Esophagus muscularis mucosa (tissue), 4 donors: ENCODE measurements at regions of chr15 and their contacts with region 1.

Region 1: GRCh38 chr15:28086175-28086703 is 12.9 kb downstream of the OCA2 start:
- DNase-seq: no peak
- H3K4me3 ChIP-seq: no peak overlapping the region
- H3K27ac ChIP-seq: no peak overlapping the region
- H3K4me1 ChIP-seq: no peaks in the 10 kb centered on the region
- H3K27me3 ChIP-seq: peaks cover 0 to 12% (median 0%) of the 10 kb centered on the region in 4 donors
- CTCF ChIP-seq: peak; percentile 57 to 70 (median 62)
- EP300 ChIP-seq: no peak
- POLR2A ChIP-seq: no peak

Region 2: DNA sequence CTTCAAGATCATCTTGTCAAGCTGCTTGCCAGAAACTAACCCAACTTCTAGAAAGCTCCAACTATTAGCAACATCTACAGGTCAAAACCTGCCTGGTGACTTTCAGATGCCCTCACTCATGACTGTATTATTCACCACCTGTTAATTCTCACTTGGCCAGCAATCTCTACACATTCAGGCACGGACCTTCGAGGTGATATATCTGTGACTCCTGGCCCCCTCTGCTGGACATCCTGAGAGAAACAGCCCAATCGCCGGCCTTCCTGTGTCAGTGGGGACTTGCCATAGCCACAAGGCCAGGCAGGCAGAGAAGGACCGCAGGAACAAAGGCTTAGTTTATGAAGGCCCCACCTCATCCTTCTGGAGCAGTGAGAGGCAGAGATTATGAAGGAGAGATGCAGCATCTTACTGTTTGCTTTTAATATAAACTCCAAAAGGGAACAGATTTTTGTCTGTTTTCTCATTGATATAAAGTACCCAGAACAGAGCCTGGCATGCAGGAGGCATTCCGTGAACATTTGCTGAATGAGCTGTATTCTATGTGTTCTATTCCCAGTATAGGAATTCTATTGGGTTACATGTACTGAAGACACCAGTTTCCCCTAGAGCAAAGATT is 37.3 kb after region 1 on chr15:
- intact Hi-C with region 1: loop called (anchors 5 kb)
- DNase-seq: no peak
- H3K4me3 ChIP-seq: no peak overlapping the region
- H3K27ac ChIP-seq: no peak overlapping the region
- H3K4me1 ChIP-seq: no peaks in the 10 kb centered on the region
- H3K27me3 ChIP-seq: no peaks in the 10 kb centered on the region
- CTCF ChIP-seq: peak; percentile 49 to 71 (median 71)
- EP300 ChIP-seq: no peak
- POLR2A ChIP-seq: no peak